Endothelial cell of umbilical vein (primary cell): ENCODE measurements at regions of chr12 and their contacts with region 1.

Region 1: DNA sequence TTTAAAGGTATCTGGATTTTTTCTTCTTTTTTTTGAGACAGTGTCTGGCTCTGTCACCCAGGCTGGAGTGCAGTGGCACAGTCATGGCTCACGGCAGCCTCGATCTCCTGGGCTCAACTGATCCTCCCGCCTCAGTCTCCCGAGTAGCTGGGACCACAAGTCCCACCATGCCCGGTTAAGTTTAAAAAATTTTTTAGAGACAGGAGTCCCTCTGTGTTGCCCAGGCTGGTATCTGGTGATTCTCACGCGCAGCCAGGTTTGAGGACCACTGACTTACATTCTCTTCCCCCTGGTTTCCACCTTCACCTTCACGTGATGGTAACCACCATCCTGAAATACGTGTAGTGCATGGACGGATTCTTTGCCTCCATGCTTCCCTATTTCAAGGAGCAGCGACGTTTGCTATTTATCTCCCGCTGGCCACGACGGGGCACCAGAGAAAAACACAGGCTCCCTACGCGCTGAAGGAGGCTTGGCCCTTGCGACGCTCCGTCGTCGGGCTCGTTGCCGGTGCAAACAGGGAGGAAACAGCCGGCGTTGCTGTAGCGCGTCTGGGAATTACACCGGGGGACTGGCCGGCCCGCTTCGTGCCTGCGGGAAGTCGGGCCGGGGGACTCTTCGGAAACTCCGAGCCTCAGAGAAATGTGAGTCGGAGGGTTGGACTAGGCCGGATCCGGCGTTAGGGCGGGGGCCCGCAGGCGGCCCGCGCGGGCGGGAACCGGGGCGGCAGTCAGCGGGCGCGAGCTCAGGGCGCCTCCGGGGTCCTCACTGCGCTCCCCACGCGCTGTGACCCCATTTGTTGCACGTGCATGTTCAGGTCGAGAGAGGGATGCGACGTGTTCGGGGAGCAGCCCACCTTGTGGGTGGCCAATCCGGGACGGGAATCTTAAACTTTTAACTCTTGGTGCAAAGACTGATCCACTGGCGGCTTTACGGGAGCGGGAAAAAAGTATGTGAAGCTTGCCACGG is at the start of gene TCHP:
- DNase-seq: peak; percentile 93
- H3K4me3 ChIP-seq: peak within 1 kb of the TSS; percentile 24 to 86 (median 72)
- H3K27ac ChIP-seq: peak within 1 kb of the TSS; percentile 22
- H3K4me1 ChIP-seq: peaks cover 8% of the 10 kb centered on the region
- H3K27me3 ChIP-seq: no peaks in the 10 kb centered on the region
- CTCF ChIP-seq: peak; percentile 27 to 45
- POLR2A ChIP-seq: peak; percentile 50
- total RNA-seq, gene TCHP: 24.3 and 26.0 TPM in 2 replicates

Region 2: GRCh38 chr12:109858764-109859163 is 41.3 kb before region 1 on chr12:
- CTCF ChIA-PET with region 1: interaction called, 6 read pairs
- POLR2A ChIA-PET with region 1: no interaction called
- dilution Hi-C with region 1: no loop called
- intact Hi-C with region 1: loop called (anchors 1 kb)
- DNase-seq: no peak
- H3K4me3 ChIP-seq: no peak overlapping the region
- H3K27ac ChIP-seq: no peak overlapping the region
- H3K4me1 ChIP-seq: no peaks in the 10 kb centered on the region
- H3K27me3 ChIP-seq: no peaks in the 10 kb centered on the region
- CTCF ChIP-seq: no peak
- POLR2A ChIP-seq: no peak

Region 3: DNA sequence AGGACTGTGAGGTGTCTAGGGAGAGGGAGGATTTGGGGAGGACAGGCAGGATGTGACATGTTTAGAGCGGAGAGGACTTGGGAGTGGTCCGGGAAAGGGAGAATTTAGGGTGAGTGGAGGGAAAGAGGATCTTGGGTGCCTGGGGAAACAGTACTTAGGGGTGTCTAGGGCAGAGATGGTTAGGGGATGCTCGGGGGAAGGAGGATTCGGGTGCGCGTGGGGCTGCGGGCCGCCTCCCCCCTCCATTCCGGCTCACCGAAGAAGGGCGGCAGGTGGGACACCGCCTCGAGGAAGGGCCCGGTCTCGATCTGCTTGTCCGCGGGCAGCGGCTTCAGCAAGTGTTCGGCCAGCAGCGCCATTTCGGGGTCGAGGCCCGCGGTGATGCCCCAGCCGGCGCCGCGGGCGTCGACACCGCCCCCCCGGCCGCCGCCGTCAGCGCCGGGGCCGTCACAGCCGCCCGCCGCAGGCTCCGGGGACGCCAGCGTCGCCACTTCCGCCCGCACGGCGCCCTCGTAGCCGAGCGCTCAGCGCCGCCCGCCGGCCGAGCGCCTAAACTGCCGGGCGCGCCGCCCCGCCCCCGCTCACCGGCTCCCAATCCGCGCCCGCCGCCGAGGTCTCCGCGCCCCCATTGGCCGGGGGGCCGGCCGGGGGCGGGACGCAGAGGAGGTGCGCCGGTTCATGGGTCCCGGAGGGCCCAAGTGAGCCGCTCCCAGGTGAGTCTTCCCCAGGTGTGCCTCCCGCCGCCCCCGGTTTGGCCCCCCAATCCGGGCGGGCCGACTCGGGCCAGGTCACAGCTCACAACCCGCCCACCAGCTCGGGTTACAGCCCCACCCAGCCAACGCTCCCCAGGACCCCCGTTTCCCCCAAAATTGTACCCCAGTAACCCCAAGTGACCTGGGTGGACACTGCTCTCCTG is 19.8 kb before region 1 on chr12 and contains the start of gene GLTP:
- CTCF ChIA-PET with region 1: no interaction called
- POLR2A ChIA-PET with region 1: no interaction called
- dilution Hi-C with region 1: no loop called
- intact Hi-C with region 1: loop called (anchors 1 kb)
- DNase-seq: peak; percentile 80
- H3K4me3 ChIP-seq: peak within 1 kb of the TSS; percentile 50 to 79 (median 76)
- H3K27ac ChIP-seq: peak within 1 kb of the TSS; percentile 40
- H3K4me1 ChIP-seq: peaks cover 17% of the 10 kb centered on the region
- H3K27me3 ChIP-seq: no peaks in the 10 kb centered on the region
- CTCF ChIP-seq: peak; percentile 38 to 68
- POLR2A ChIP-seq: peak; percentile 77
- total RNA-seq, gene GLTP: 46.6 and 48.0 TPM in 2 replicates

Region 4: GRCh38 chr12:109888179-109889020 is 11.7 kb before region 1 on chr12:
- CTCF ChIA-PET with region 1: interaction called, 3 read pairs
- POLR2A ChIA-PET with region 1: interaction called, 3 read pairs
- dilution Hi-C with region 1: no loop called
- intact Hi-C with region 1: loop called (anchors 1 kb)
- DNase-seq: peak; percentile 74
- H3K4me3 ChIP-seq: peak overlapping the region in 1 of 3 experiments; percentile 3
- H3K27ac ChIP-seq: peak overlapping the region; percentile 94
- H3K4me1 ChIP-seq: peaks cover 23% of the 10 kb centered on the region
- H3K27me3 ChIP-seq: no peaks in the 10 kb centered on the region
- CTCF ChIP-seq: no peak
- POLR2A ChIP-seq: peak; percentile 36

Region 5: DNA sequence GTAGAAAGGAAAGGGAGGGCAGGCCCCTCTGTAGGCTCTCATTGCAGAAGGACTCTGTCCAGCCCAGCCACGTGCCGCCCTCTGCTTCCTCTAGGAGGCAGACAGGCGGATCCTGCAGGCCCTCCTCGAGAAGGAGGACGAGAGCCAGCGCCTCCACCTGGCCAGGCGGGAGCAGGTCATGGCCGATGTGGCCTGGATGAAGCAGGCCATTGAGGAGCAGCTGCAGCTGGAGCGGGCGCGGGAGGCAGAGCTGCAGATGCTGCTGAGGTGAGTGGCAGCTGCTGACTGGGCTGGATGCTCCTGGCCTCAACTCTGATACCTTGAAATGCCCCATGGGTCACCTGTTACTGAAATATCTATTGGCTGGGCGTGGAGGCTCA is 10.9 kb after region 1 on chr12:
- CTCF ChIA-PET with region 1: interaction called, 11 read pairs
- POLR2A ChIA-PET with region 1: no interaction called
- dilution Hi-C with region 1: no loop called
- intact Hi-C with region 1: no loop called
- DNase-seq: no peak
- H3K4me3 ChIP-seq: no peak overlapping the region
- H3K27ac ChIP-seq: no peak overlapping the region
- H3K4me1 ChIP-seq: no peaks in the 10 kb centered on the region
- H3K27me3 ChIP-seq: no peaks in the 10 kb centered on the region
- CTCF ChIP-seq: peak; percentile 44 to 56
- POLR2A ChIP-seq: no peak

Region 6: GRCh38 chr12:109927622-109928021 is 27.6 kb after region 1 on chr12:
- CTCF ChIA-PET with region 1: interaction called, 20 read pairs
- POLR2A ChIA-PET with region 1: no interaction called
- dilution Hi-C with region 1: no loop called
- intact Hi-C with region 1: loop called (anchors 2 kb)
- DNase-seq: peak; percentile 47
- H3K4me3 ChIP-seq: no peak overlapping the region
- H3K27ac ChIP-seq: no peak overlapping the region
- H3K4me1 ChIP-seq: no peaks in the 10 kb centered on the region
- H3K27me3 ChIP-seq: no peaks in the 10 kb centered on the region
- CTCF ChIP-seq: peak; percentile 69 to 83
- POLR2A ChIP-seq: no peak

Region 7: GRCh38 chr12:109987615-109988014 is 87.5 kb after region 1 on chr12:
- CTCF ChIA-PET with region 1: no interaction called
- POLR2A ChIA-PET with region 1: no interaction called
- dilution Hi-C with region 1: no loop called
- intact Hi-C with region 1: no loop called
- DNase-seq: no peak
- H3K4me3 ChIP-seq: no peak overlapping the region
- H3K27ac ChIP-seq: no peak overlapping the region
- H3K4me1 ChIP-seq: peaks cover 11% of the 10 kb centered on the region
- H3K27me3 ChIP-seq: no peaks in the 10 kb centered on the region
- CTCF ChIP-seq: no peak
- POLR2A ChIP-seq: no peak

Region 8: DNA sequence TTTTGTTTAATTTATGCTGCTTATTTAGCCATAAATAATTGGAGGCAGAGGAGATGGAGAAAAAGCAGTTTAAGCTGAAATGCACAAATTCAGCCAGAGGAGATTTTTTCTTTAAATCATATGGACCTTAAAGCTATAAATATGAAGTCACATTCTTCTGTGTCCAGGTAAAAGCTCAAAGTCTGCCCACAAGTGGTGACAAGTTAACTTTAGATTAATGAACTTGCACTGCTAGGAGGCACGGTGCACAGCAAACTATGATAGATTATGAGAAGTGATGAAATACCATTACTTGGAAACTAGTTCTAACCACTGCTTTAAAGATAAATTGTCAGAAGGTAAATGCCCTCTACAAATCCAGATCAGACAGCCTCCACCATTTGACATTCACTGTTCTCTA is 293.1 kb after region 1 on chr12:
- CTCF ChIA-PET with region 1: no interaction called
- POLR2A ChIA-PET with region 1: no interaction called
- dilution Hi-C with region 1: no loop called
- intact Hi-C with region 1: no loop called
- DNase-seq: no peak
- H3K4me3 ChIP-seq: no peak overlapping the region
- H3K27ac ChIP-seq: no peak overlapping the region
- H3K4me1 ChIP-seq: no peaks in the 10 kb centered on the region
- H3K27me3 ChIP-seq: no peaks in the 10 kb centered on the region
- CTCF ChIP-seq: no peak
- POLR2A ChIP-seq: no peak